ENCODE measurements at regions of chr17 and their contacts with region 1.

Region 1: DNA sequence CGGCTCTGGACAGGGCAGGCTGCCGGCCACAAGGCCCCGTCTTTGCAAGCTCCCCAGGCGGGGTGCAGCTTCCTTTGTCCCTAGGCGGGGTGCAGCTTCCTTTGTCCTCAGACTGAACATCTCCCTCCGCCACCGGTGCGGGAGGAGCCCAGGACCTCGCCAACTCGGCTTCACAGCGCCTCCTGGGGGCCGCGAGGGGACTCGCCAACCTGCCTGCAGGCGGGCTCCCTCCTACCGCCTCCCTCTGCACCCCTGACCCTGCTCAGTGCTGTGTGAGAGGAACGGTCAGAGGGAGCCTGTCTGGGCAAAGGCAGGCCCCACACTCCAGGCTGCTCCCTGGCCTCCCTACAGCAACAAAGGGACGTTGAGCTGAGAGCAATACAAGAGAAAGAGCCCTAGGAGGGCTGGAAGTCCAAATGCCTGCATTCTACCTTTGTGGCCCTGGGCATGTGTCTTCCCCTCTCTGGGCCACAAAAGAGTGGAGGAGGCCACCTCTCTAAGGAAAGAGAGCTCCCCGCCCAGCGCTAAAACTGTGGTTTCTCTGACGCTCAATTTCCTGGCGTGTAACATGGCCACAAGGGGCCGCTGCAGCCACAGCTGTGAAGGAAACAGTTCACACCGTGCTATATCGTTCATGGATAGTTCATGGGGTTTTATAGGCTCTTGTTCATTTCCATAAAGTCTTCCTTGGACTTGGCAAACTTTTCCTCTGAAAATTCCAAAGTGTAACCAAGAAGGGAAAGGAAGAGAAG is 20.9 kb upstream of the KRT19 start:
- DNase-seq: peak; percentile 92
- H3K4me3 ChIP-seq: peak overlapping the region; percentile 21 to 25; a peak in 2 of 4 replicates
- H3K27ac ChIP-seq: peak overlapping the region; percentile 85 to 86
- H3K4me1 ChIP-seq: peaks cover 17 to 30% of the 10 kb centered on the region in 2 experiments; a peak in 3 of 4 replicates
- H3K27me3 ChIP-seq: no peaks in the 10 kb centered on the region
- CTCF ChIP-seq: peak; percentile 94
- EP300 ChIP-seq: peak in 1 of 2 experiments; percentile 6; a peak in 2 of 4 replicates
- RAD21 ChIP-seq: peak; percentile 92

Region 2: DNA sequence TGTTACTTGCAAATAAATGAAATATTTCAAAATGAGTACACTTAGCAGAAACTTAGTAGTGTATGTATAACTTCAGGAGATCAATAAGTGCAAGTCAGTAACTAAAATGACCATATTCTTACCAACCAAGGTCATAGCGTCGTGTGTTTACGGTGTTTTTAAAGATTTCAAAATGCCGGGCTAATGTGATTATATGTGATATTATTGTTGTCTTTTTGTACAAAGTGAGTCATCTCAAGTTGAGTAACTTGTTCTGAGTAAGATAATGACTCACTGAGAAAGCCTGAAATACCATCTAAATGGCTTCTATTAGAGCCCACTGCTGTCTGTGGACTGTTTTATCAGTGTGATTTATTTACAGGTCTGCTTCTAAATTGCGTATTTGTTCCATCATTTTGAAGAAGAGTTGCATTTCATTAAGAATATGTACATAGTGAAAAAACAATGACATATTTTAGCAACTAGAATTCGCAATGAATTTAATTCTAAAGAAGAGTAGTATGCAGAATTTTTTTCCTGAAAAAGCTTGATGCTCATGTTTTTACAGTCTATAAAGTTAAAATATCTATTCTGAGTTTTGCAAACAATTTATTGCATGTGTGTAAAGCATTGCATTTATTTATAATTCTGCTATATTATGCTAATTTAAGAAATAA is 694.7 kb before region 1 on chr17:
- CTCF ChIA-PET with region 1: interaction called, 33 read pairs
- POLR2A ChIA-PET with region 1: no interaction called
- DNase-seq: no peak
- H3K4me3 ChIP-seq: no peak overlapping the region
- H3K27ac ChIP-seq: peak overlapping the region in 1 of 2 experiments; percentile 48; a peak in 2 of 4 replicates
- H3K4me1 ChIP-seq: peaks cover 6 to 8% of the 10 kb centered on the region in 2 experiments; a peak in 2 of 4 replicates
- H3K27me3 ChIP-seq: no peaks in the 10 kb centered on the region
- CTCF ChIP-seq: no peak
- EP300 ChIP-seq: peak in 1 of 2 experiments; percentile 62; a peak in 1 of 4 replicates
- RAD21 ChIP-seq: no peak

Region 3: DNA sequence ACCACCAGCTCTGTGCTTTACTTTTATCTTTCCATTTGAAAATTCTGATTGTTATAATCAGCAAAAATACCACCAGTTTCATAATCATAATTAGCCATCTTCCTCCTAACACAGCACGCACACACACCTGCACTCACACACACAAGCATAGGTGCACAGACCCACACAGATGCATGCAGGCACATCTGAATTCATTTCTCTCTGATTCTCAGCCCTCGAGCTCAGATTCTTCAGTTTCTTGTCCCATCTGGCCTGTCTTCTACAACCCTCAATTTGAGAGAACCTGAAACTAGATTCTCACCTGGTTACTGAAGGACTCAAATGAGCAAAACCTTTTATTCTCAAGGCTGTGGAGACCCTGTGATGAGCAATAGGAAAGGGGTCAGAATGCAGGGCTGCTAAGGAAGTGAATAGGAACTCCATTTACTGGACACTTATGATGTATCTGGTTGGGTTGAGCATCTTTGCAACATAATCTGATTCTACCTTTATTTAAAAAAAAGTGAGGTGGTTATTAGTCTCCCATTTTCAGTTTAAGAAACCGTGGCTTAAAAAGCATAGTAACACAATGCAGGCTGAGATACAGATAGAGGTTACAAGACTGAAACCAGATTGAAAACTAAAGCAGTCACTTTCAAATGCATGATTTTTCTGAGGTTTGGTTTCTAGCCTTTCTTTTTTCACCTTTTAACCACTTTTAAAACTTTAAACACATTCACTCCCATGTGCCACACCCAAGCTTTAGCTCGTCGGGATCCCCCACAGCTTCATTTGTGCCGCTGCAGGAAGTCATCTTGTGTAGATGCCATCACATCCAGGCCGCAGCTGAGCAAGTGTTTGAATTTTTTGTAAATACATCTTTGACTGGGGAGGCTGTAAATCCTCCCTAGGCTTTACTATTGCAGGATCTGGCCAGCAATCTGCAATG is 207.8 kb before region 1 on chr17:
- CTCF ChIA-PET with region 1: interaction called, 10 read pairs
- POLR2A ChIA-PET with region 1: no interaction called
- DNase-seq: no peak
- H3K4me3 ChIP-seq: no peak overlapping the region
- H3K27ac ChIP-seq: no peak overlapping the region
- H3K4me1 ChIP-seq: no peaks in the 10 kb centered on the region
- H3K27me3 ChIP-seq: no peaks in the 10 kb centered on the region
- CTCF ChIP-seq: no peak
- EP300 ChIP-seq: no peak
- RAD21 ChIP-seq: no peak

Region 4: DNA sequence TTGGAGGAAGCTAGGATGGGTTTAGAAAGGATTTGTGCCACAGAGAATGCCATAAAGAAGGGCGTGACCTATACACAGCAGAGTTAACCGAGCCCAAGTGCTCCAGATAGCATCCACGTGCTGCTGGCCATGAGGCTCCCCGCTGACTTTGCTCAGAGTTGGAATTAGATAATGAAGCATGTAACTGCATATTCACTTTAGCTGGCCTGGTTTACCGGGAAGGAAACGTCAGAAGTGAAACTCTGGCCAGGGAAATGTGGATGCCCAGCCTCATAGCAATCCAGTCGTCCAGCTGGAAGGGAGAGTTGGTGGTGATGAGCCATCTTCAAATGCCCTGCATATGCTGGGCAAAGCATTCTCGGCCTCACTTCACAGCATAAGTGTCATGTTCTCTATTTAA is 74.2 kb before region 1 on chr17:
- CTCF ChIA-PET with region 1: interaction called, 15 read pairs
- POLR2A ChIA-PET with region 1: no interaction called
- DNase-seq: no peak
- H3K4me3 ChIP-seq: no peak overlapping the region
- H3K27ac ChIP-seq: no peak overlapping the region
- H3K4me1 ChIP-seq: no peaks in the 10 kb centered on the region
- H3K27me3 ChIP-seq: no peaks in the 10 kb centered on the region
- CTCF ChIP-seq: no peak
- EP300 ChIP-seq: no peak
- RAD21 ChIP-seq: no peak

Region 5: DNA sequence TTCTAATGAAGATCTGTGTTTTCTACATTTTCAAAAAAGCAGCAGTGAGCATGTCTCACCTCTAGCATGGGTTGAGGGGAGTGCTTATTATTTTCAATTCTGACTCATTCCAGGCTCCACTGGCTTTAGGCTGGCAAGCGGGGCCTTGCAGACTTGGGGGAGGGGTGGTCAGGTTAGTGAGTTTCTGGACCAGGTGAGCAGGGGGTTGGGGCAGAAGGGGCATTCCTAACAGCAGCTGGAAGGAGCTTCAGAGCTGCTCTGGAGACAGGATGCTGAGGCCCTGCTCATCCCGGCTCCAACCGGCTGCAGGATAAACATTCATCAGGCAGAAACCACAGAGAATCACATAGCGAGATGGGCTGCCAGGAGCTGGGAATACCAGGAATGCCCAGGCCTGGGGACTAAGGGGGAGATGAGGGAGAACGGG is 10.4 kb before region 1 on chr17:
- CTCF ChIA-PET with region 1: interaction called, 144 read pairs
- POLR2A ChIA-PET with region 1: no interaction called
- DNase-seq: no peak
- H3K4me3 ChIP-seq: no peak overlapping the region
- H3K27ac ChIP-seq: peak overlapping the region; percentile 26 to 77; a peak in 2 of 4 replicates
- H3K4me1 ChIP-seq: peaks cover 17 to 37% of the 10 kb centered on the region in 2 experiments; a peak in 3 of 4 replicates
- H3K27me3 ChIP-seq: no peaks in the 10 kb centered on the region
- CTCF ChIP-seq: no peak
- EP300 ChIP-seq: no peak
- RAD21 ChIP-seq: no peak

Region 6: DNA sequence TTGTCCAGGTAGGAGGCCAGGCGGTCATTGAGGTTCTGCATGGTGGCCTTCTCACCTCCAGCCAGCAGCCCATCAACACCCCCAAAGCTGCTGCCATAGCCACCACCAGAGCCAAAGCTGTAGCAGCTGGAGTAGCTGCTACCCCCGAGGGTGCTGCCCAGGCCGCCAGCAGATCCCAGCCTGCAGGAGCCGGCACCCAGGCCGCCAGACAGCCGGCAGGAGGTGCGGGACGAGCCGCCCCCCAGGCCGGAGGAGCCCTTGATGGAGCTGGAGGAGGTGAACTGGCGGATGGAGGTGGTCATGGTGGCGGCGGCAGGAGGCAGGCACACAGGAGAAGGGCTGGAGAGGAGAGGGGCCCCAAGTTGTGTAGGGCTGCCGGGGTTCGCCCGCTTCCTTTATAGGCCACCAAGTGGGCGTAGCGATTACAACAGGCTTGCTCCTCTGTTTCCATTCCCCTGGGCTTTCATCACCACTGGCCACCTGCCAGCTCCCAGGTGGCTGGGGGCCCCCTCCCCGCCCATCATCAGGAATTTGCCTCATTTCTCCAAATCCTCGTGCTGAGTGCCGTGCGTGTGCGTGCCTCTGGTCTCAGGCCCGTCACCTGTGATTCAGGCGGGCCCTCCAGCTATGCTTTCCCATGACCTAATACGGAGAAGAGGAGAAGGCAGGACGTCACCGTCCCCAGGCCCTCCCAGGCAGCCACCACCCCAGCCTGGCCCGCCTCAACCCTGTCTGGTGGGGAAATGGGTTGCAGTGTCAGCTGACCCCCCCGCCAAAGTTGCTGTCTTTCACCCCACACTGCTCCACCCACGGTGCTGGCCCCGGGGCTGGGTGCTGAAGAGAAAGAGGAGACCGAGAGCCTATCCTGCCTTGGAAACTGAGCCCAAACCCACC is 75.4 kb after region 1 on chr17 and contains the start of gene KRT17:
- CTCF ChIA-PET with region 1: interaction called, 11 read pairs
- POLR2A ChIA-PET with region 1: no interaction called
- DNase-seq: no peak
- H3K4me3 ChIP-seq: no peak within 1 kb of the TSS
- H3K27ac ChIP-seq: no peak within 1 kb of the TSS
- H3K4me1 ChIP-seq: peaks cover 0 to 13% of the 10 kb centered on the region in 2 experiments; a peak in 1 of 4 replicates
- H3K27me3 ChIP-seq: no peaks in the 10 kb centered on the region
- CTCF ChIP-seq: no peak
- EP300 ChIP-seq: no peak
- RAD21 ChIP-seq: no peak
- polyA plus RNA-seq, gene KRT17: 0.19 and 0.39 TPM in 2 replicates

Region 7: GRCh38 chr17:41754066-41754465 is 205.0 kb after region 1 on chr17:
- CTCF ChIA-PET with region 1: no interaction called
- POLR2A ChIA-PET with region 1: no interaction called
- DNase-seq: no peak
- H3K4me3 ChIP-seq: no peak overlapping the region
- H3K27ac ChIP-seq: no peak overlapping the region
- H3K4me1 ChIP-seq: no peaks in the 10 kb centered on the region; a peak in 1 of 4 replicates
- H3K27me3 ChIP-seq: no peaks in the 10 kb centered on the region
- CTCF ChIP-seq: no peak
- EP300 ChIP-seq: no peak
- RAD21 ChIP-seq: no peak

Region 8: DNA sequence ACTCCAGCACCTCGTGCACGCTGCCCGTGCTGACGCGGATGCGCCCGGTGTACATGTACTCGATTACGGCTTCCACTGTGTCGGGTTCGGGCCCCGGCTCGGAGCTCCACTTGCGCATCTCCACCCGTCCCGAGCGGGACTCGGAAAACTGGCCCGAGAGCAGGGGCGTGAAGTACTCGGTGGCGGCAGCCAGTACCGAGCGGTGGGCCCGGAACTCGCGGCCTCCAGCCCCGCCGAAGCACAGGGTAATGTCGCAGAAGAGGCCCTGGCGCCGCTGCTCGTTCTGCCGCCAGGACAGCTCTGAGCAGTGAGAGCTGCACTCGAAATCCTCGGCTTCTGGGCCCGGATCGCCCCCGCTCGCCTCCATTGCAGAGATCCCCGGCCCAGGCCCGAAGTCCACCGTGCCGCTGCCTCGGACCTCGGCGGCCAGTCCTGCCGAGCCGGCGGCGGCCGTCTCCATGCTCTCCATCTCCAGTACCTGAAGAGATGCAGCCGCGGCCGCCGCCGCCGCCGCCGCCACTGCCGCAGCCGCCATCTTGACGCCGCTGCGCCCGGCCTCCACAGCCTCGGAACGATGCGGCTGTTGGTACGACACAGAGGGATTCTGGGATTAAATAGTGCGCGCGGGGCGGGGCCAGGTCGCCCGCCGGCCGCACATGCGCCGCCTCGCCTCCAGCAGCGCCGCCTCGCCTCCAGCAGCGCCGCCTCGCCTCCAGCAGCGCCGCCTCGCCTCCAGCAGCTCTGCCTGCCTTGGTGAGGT is 316.0 kb after region 1 on chr17 and contains the start of gene KLHL11:
- CTCF ChIA-PET with region 1: no interaction called
- POLR2A ChIA-PET with region 1: no interaction called
- DNase-seq: peak; percentile 96
- H3K4me3 ChIP-seq: peak within 1 kb of the TSS; percentile 91 to 95
- H3K27ac ChIP-seq: peak within 1 kb of the TSS; percentile 72 to 88
- H3K4me1 ChIP-seq: peaks cover 5 to 20% of the 10 kb centered on the region in 2 experiments; a peak in 2 of 4 replicates
- H3K27me3 ChIP-seq: no peaks in the 10 kb centered on the region
- CTCF ChIP-seq: no peak
- EP300 ChIP-seq: peak in 1 of 2 experiments; percentile 44; a peak in 1 of 4 replicates
- RAD21 ChIP-seq: no peak; the same call in 1 of the 2 replicates
- polyA plus RNA-seq, gene KLHL11: 2.6 and 3.0 TPM in 2 replicates